Heart right ventricle (tissue), 16 donors: ENCODE measurements at regions of chr7 and their contacts with region 1.

Region 1: DNA sequence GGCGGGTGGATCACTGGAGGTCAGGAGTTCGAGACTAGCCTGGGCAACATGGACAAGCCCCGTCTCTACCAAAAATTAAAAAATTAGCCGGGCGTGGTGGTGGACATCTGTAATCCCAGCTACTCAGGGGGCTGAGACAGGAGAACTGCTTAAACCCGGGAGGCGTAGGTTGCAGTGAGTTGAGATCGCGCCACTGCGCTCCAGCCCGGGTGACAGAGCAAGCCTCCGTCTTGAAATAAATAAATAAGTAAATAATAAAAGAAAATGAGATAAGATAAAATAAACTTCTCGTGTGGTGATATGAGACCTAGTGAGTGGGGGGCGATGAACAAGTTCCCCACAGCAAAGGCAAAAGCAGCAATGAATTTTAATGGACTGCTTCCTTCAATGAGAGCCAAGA is 33.6 kb upstream of the LMTK2 start:
- DNase-seq: no peak
- ATAC-seq: no peak
- H3K4me3 ChIP-seq: no peak overlapping the region
- H3K27ac ChIP-seq: no peak overlapping the region
- H3K4me1 ChIP-seq: no peaks in the 10 kb centered on the region
- H3K27me3 ChIP-seq: peaks cover 0 to 7% (median 0%) of the 10 kb centered on the region in 7 donors
- CTCF ChIP-seq: no peak

Region 2: DNA sequence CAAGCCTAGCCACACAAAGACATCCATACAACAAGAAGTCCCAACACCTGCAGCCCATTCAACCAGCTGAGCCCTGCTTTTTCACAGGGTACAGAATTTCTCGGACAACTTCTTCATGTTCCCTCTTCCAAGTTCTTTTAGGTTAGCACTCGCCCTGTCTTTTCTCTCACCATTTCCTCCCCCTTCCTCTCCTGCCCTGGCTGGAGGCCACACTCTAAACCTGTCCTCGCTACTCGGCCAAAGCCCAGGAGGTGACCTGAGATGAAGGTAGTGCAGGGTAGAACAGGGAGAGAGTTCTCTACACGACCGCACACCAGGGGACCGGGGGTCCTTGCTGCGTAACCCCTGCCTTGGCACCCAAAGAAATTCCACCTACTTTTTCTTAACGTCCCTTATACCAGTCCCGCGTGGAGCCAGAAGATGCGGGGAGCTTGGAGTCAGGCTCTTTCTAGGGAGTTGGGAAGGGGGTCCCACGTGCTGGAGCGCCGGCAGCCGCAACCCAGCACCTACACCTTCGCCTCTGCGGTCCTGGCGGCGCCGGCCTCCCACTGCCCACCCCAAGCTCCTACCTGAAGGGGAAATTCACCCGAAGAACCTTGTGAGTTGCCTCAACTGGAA is 1083.7 kb before region 1 on chr7:
- intact Hi-C with region 1: loop called in 1 of 10 experiments (anchors 5 kb)
- DNase-seq: no peak
- ATAC-seq: no peak
- H3K4me3 ChIP-seq: no peak overlapping the region
- H3K27ac ChIP-seq: no peak overlapping the region
- H3K4me1 ChIP-seq: peaks cover 0 to 12% (median 0%) of the 10 kb centered on the region in 9 donors
- H3K27me3 ChIP-seq: peaks cover 18 to 100% (median 98%) of the 10 kb centered on the region in 7 donors
- CTCF ChIP-seq: no peak

Region 3: GRCh38 chr7:98202367-98203195 is 129.5 kb after region 1 on chr7:
- intact Hi-C with region 1: no loop called
- DNase-seq: no peak
- ATAC-seq: no peak
- H3K4me3 ChIP-seq: no peak overlapping the region
- H3K27ac ChIP-seq: no peak overlapping the region
- H3K4me1 ChIP-seq: peaks cover 0 to 10% (median 0%) of the 10 kb centered on the region in 9 donors
- H3K27me3 ChIP-seq: no peaks in the 10 kb centered on the region
- CTCF ChIP-seq: no peak